ENCODE measurements at regions of chr2 and their contacts with region 1.

Region 1: GRCh38 chr2:195656859-195657633 is at the start of gene SLC39A10:
- DNase-seq: peak; percentile 98
- H3K4me3 Mint-ChIP-seq: peak within 1 kb of the TSS; percentile 99
- H3K27ac Mint-ChIP-seq: peak within 1 kb of the TSS; percentile 99
- H3K4me1 Mint-ChIP-seq: peaks cover 26% of the 10 kb centered on the region
- H3K27me3 Mint-ChIP-seq: peaks cover 2% of the 10 kb centered on the region
- total RNA-seq, gene SLC39A10: 37.4 to 41.0 TPM

Region 2: GRCh38 chr2:194545978-194546377 is 1111.1 kb before region 1 on chr2:
- CTCF ChIA-PET with region 1: no interaction called
- intact Hi-C with region 1: loop called (anchors 1 kb)
- DNase-seq: no peak
- H3K4me3 Mint-ChIP-seq: no peak overlapping the region
- H3K27ac Mint-ChIP-seq: no peak overlapping the region
- H3K4me1 Mint-ChIP-seq: no peaks in the 10 kb centered on the region
- H3K27me3 Mint-ChIP-seq: peaks cover 7% of the 10 kb centered on the region

Region 3: GRCh38 chr2:195407782-195408181 is 249.3 kb before region 1 on chr2:
- CTCF ChIA-PET with region 1: interaction called, 9 read pairs
- intact Hi-C with region 1: loop called (anchors 1 kb)
- DNase-seq: no peak
- H3K4me3 Mint-ChIP-seq: no peak overlapping the region
- H3K27ac Mint-ChIP-seq: no peak overlapping the region
- H3K4me1 Mint-ChIP-seq: peaks cover 18% of the 10 kb centered on the region
- H3K27me3 Mint-ChIP-seq: no peaks in the 10 kb centered on the region

Region 4: DNA sequence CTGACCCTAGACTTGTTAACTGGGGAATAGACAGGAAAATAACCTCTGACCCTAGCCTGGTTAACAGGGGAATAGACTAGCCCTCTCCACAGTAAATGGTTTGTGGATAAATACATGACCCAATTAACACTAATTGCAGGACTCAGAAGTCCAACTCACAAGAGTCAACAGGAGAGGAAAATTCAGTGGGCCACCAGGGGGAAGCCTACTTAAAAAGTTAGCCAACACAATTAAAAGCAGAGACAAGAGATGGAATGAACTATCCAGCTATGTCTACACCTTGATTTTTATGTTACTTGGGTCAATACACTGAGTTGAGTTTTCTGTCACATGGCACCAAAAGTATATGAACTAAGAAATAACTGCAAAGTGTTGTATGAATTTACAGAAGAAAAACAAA is 158.9 kb before region 1 on chr2:
- CTCF ChIA-PET with region 1: interaction called, 19 read pairs
- intact Hi-C with region 1: loop called (anchors 1 kb)
- DNase-seq: peak; percentile 76
- H3K4me3 Mint-ChIP-seq: no peak overlapping the region
- H3K27ac Mint-ChIP-seq: no peak overlapping the region
- H3K4me1 Mint-ChIP-seq: peaks cover 44% of the 10 kb centered on the region
- H3K27me3 Mint-ChIP-seq: no peaks in the 10 kb centered on the region

Region 5: DNA sequence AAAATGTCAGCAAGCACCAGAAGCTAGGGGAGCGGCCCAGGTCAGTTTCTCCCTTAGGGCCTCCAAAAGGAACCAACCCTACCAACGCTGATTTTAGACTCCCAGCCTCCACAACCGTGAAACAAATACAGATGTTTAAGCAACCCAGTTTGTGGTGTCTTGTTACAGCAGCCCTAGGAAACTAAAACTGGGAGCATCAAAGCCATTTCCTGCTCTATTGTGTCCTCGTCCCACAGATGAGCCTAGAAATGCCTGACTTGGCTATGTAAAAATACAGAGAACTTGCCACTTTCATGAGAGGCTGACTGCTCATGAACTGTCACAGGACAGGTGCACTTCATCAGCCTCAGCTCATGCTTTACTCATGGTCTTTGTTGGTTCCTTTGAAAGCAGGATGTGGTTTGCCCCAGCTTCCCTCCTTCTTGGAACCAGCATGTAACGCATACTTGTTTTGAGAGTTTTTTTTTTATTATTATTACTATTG is 97.6 kb before region 1 on chr2:
- CTCF ChIA-PET with region 1: interaction called, 5 read pairs
- intact Hi-C with region 1: loop called (anchors 1 kb)
- DNase-seq: peak; percentile 95
- H3K4me3 Mint-ChIP-seq: peak overlapping the region; percentile 59
- H3K27ac Mint-ChIP-seq: peak overlapping the region; percentile 98
- H3K4me1 Mint-ChIP-seq: peaks cover 71% of the 10 kb centered on the region
- H3K27me3 Mint-ChIP-seq: no peaks in the 10 kb centered on the region

Region 6: GRCh38 chr2:195620499-195620898 is 36.5 kb before region 1 on chr2:
- CTCF ChIA-PET with region 1: no interaction called
- intact Hi-C with region 1: no loop called
- DNase-seq: no peak
- H3K4me3 Mint-ChIP-seq: no peak overlapping the region
- H3K27ac Mint-ChIP-seq: no peak overlapping the region
- H3K4me1 Mint-ChIP-seq: peaks cover 2% of the 10 kb centered on the region
- H3K27me3 Mint-ChIP-seq: no peaks in the 10 kb centered on the region

Region 7: DNA sequence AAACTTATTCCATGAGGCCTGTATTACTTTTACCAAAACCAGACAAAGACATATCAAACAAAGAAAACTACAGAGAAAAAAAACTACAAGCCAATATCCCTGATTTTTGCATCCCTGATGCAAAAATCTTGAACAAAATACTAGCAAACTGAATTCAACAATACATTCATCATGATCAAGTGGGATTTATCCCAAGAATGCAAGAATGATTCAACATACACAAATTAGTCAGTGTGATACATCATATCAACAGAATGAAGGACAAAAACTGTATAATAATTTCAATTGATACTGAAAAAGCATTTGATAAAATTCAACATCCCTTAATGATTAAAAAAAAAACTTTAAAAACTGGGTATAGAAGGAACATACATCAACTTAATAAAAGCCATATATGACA is 106.8 kb after region 1 on chr2:
- CTCF ChIA-PET with region 1: no interaction called
- intact Hi-C with region 1: no loop called
- DNase-seq: no peak
- H3K4me3 Mint-ChIP-seq: no peak overlapping the region
- H3K27ac Mint-ChIP-seq: no peak overlapping the region
- H3K4me1 Mint-ChIP-seq: no peaks in the 10 kb centered on the region
- H3K27me3 Mint-ChIP-seq: no peaks in the 10 kb centered on the region

Region 8: GRCh38 chr2:196233021-196233804 is 576.2 kb after region 1 on chr2:
- CTCF ChIA-PET with region 1: no interaction called
- intact Hi-C with region 1: loop called (anchors 2 kb)
- DNase-seq: peak; percentile 34
- H3K4me3 Mint-ChIP-seq: no peak overlapping the region
- H3K27ac Mint-ChIP-seq: peak overlapping the region; percentile 91
- H3K4me1 Mint-ChIP-seq: peaks cover 92% of the 10 kb centered on the region
- H3K27me3 Mint-ChIP-seq: no peaks in the 10 kb centered on the region

Region 9: GRCh38 chr2:197453161-197453914 is 1796.3 kb after region 1 on chr2 and contains the start of gene COQ10B:
- CTCF ChIA-PET with region 1: no interaction called
- intact Hi-C with region 1: loop called (anchors 1 kb)
- DNase-seq: peak; percentile 99
- H3K4me3 Mint-ChIP-seq: peak within 1 kb of the TSS; percentile 100
- H3K27ac Mint-ChIP-seq: peak within 1 kb of the TSS; percentile 100
- H3K4me1 Mint-ChIP-seq: peaks cover 45% of the 10 kb centered on the region
- H3K27me3 Mint-ChIP-seq: no peaks in the 10 kb centered on the region
- total RNA-seq, gene COQ10B: 17.5 to 17.8 TPM

Measured in activated naive CD4-positive, alpha-beta T cell treated with anti-CD3 and anti-CD28 coated beads for 36 hours (primary cell).